Lower leg skin (tissue), 4 donors: ENCODE measurements at regions of chr4 and their contacts with region 1.

Region 1: DNA sequence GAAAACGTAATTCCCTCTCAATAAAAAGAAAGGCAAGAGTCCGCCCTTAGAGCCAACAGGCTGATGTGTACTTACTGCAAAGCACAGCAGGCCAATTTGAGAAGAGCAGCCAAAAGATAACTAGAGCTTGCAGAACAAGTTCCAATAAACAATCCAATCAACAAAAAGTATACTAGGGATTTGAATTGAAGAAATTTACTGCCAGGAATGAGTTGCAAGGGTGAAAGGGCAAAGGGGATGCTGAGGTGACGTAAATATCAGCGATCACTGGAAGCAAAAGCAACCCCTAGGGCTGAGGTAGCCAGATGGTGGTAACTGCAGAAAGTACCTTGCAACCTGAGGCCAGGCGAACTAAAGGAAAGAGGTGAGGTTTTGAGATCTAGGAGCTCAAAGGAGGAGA is 152.1 kb upstream of the TENM3 start:
- DNase-seq: no peak
- H3K4me3 ChIP-seq: no peak overlapping the region
- CTCF ChIP-seq: no peak
- POLR2A ChIP-seq: no peak

Region 2: DNA sequence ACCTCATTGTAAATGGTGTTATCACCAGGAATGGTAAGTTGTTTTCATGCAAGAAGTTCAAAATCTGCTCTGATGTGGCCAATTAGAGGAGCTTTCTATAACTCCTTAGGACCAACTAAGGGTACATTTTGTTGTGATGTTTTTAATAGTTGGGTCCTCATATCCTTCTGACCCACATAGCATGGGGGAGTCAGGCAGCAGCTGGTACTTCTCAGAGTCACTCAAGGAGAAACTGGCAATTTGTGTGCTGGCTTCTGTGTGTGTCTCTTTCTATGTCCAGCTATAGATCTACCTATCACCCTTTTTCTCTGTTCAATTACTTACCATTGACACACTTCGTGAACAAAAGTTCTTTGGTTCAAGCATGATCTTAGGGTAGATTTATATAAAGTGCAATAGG is 42.3 kb before region 1 on chr4:
- intact Hi-C with region 1: loop called (anchors 1 kb)
- DNase-seq: no peak
- H3K4me3 ChIP-seq: no peak overlapping the region
- CTCF ChIP-seq: no peak
- POLR2A ChIP-seq: no peak